ENCODE measurements at regions of chr15 and their contacts with region 1.

Region 1: GRCh38 chr15:89358755-89359439 is 24.3 kb upstream of the POLG start:
- DNase-seq: peak; percentile 94

Region 2: DNA sequence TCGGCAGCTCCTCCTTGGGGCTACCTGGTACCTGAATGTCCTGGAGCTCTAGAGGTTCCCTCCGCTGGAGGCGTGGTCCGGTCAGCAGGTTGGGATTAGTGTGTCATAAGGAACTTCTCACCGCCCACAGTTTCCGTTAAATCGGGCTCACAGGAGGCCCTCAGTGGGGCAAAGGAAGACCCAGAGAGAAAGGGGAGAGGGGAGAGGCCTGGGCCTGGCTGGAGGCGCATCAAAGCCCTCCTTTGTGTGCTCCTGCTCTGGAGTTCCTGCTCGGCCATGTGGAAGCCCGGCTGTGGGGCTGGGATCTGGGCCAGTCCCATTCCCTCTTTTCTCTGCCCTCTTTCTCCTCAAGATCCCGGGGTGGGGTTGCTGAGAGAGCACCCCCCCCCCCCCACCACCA is 137.4 kb before region 1 on chr15 and contains the start of gene RLBP1:
- CTCF ChIA-PET with region 1: no interaction called
- POLR2A ChIA-PET with region 1: no interaction called
- DNase-seq: no peak

Region 3: GRCh38 chr15:89346516-89347231 is 12.2 kb before region 1 on chr15:
- CTCF ChIA-PET with region 1: interaction called, 16 read pairs
- POLR2A ChIA-PET with region 1: no interaction called
- DNase-seq: no peak

Region 4: GRCh38 chr15:89389841-89390603 is 31.1 kb after region 1 on chr15:
- CTCF ChIA-PET with region 1: interaction called, 38 read pairs
- POLR2A ChIA-PET with region 1: interaction called, 6 read pairs
- DNase-seq: no peak

Region 5: GRCh38 chr15:89406940-89407607 is 48.2 kb after region 1 on chr15:
- CTCF ChIA-PET with region 1: interaction called, 96 read pairs
- POLR2A ChIA-PET with region 1: interaction called, 3 read pairs
- DNase-seq: no peak

Region 6: DNA sequence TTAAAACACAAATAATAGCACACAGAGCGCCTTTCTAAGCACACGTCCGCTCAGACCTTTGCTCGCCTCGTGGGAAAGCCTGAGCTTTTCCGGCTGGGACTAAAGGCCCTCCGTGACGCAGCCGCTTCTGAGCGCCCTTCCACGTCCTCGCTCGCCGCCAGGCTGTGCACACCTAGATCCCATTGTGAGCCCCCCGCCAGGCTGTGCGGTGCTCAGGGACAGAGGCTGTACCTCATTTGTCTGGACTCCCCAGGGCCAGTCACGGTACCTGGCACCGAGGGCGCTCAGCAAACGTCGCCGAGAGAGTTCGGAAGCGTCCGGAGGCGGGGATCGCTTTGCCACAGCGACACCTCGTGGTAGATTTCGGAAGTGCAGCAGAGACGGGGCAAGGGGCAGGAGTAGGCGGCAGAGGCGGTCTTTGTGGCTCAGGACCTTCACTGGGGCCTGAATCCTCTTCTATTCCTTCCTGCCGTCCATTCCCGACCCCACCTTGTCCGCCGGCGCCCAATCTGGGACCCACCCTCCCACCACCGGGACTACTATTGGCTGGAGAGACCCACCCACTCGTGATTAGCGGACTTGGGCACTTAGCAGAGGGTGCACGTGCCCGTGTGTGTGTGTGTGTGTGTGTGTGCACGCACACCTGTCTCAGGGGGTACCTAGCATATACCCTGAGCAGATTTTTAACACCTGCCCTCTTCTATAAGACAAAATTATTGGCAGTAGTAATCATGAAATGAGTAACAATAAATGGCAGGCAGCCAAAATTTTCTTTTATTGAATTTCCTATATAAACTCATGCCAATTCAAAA is 71.8 kb after region 1 on chr15:
- CTCF ChIA-PET with region 1: interaction called, 97 read pairs
- POLR2A ChIA-PET with region 1: interaction called, 8 read pairs
- DNase-seq: peak; percentile 96

Region 7: GRCh38 chr15:89472785-89473256 is 113.9 kb after region 1 on chr15:
- CTCF ChIA-PET with region 1: interaction called, 54 read pairs
- POLR2A ChIA-PET with region 1: no interaction called
- DNase-seq: peak; percentile 90